ENCODE measurements at regions of chr6 and their contacts with region 1.

Region 1: GRCh38 chr6:111973118-111973761 is 80.7 kb upstream of the CCN6 start:
- DNase-seq: peak; percentile 56 to 70 (median 56)
- ATAC-seq: peak; percentile 84 to 94
- H3K4me3 ChIP-seq: no peak overlapping the region
- H3K27ac ChIP-seq: peak overlapping the region; percentile 85
- H3K4me1 ChIP-seq: no peaks in the 10 kb centered on the region
- H3K27me3 ChIP-seq: no peaks in the 10 kb centered on the region

Region 2: DNA sequence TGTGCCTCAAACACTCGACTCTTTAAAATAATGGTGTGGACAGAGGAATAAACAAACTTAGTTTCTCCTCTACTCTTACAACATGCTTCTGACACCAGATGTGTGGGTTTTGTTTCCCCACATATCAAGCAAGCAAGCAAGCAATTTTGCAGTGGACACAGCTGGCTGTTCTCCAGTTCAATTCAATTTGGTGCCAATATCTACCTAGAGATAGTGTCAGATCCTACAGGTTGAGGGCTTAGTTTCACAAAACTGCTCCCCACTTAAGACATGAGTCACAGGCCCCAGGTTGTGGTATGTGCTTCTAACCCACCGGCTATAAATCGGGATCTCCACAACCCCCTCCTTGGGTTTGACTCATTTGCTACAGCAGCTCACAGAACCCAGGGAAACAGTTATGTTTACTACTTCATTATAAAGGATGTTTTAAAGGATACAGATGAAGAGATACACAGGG is 236.1 kb before region 1 on chr6:
- intact Hi-C with region 1: no loop called
- DNase-seq: no peak
- ATAC-seq: no peak
- H3K4me3 ChIP-seq: no peak overlapping the region
- H3K27ac ChIP-seq: no peak overlapping the region
- H3K4me1 ChIP-seq: peaks cover 16% of the 10 kb centered on the region
- H3K27me3 ChIP-seq: no peaks in the 10 kb centered on the region

Region 3: DNA sequence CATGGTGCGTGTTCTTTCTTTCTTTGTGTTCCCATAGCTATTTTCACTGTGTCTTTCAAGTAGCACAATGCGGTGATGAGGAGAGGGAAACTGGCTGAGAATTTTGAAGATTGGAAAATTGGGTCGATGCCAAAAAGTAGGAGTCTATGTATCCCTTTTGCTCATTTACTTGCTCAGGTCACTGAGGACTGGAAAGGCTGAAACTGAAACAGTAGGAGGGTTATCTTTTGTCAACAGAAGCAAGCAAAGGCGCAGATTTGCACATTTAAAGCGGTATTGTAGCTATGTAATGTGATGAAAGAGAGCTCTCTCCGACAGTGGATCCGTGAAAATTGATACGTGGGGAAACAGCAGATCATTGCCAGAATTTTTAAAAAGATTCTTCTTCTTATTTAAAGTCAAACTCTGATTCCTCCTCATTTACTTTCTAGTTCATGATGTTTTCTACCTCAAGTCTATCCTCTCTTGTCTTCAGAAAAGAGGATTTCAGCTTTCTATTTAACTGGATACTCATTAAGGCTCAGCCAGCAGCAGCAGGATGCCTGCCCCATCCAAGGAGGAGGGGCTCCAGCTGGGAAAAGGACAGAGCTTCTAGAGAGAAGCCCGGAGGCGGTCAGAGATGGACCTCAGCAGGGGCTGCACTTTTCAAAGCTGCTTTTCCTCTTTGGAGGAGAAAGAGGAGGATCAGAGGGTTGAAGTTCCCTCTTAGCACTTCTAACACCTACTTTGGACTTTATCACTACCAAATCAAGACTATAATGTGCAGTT is 84.1 kb before region 1 on chr6:
- intact Hi-C with region 1: loop called in 2 of 4 experiments (anchors 10 kb)
- DNase-seq: peak; percentile 40 to 75 (median 69)
- ATAC-seq: peak; percentile 86 to 87
- H3K4me3 ChIP-seq: peak overlapping the region; percentile 33
- H3K27ac ChIP-seq: no peak overlapping the region
- H3K4me1 ChIP-seq: no peaks in the 10 kb centered on the region
- H3K27me3 ChIP-seq: no peaks in the 10 kb centered on the region

Region 4: DNA sequence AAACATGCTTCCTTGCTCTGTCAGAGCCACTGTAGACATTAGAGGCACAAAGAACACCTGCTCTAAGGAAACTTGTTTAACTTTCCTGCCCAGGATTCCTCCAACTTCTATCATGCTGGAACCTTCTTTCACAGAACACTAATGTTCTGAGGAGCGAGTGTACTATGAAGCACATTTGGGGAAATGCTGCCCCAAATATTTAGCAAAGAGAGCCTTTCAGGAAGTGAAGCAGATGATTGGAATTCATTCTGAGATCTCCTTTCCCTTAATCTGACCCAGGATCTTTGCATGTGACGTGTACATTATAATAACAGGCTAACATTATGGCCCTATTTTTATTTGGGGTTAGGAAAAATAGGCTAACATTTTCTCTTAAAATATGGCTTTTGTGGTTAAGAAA is 79.0 kb before region 1 on chr6:
- intact Hi-C with region 1: loop called in 2 of 4 experiments (anchors 10 kb)
- DNase-seq: no peak
- ATAC-seq: no peak
- H3K4me3 ChIP-seq: no peak overlapping the region
- H3K27ac ChIP-seq: no peak overlapping the region
- H3K4me1 ChIP-seq: no peaks in the 10 kb centered on the region
- H3K27me3 ChIP-seq: no peaks in the 10 kb centered on the region

Region 5: GRCh38 chr6:112153926-112154607 is 180.8 kb after region 1 on chr6:
- intact Hi-C with region 1: no loop called
- DNase-seq: no peak
- ATAC-seq: no peak
- H3K4me3 ChIP-seq: no peak overlapping the region
- H3K27ac ChIP-seq: no peak overlapping the region
- H3K4me1 ChIP-seq: peaks cover 1% of the 10 kb centered on the region
- H3K27me3 ChIP-seq: no peaks in the 10 kb centered on the region

Measured in right cardiac atrium (tissue), 5 donors.